A673 (cell line): ENCODE measurements at regions of chr18 and their contacts with region 1.

Region 1: GRCh38 chr18:40565805-40566509 is 1389.1 kb upstream of the PIK3C3 start:
- DNase-seq: no peak
- H3K4me3 ChIP-seq: no peak overlapping the region
- H3K27ac ChIP-seq: no peak overlapping the region
- H3K4me1 ChIP-seq: no peaks in the 10 kb centered on the region
- H3K27me3 ChIP-seq: no peaks in the 10 kb centered on the region
- CTCF ChIP-seq: no peak

Region 2: GRCh38 chr18:41645589-41646360 is 1079.8 kb after region 1 on chr18:
- CTCF ChIA-PET with region 1: no interaction called
- POLR2A ChIA-PET with region 1: no interaction called
- intact Hi-C with region 1: no loop called
- DNase-seq: no peak
- H3K4me3 ChIP-seq: no peak overlapping the region
- H3K27ac ChIP-seq: no peak overlapping the region
- H3K4me1 ChIP-seq: no peaks in the 10 kb centered on the region
- H3K27me3 ChIP-seq: peaks cover 7% of the 10 kb centered on the region
- CTCF ChIP-seq: no peak

Region 3: DNA sequence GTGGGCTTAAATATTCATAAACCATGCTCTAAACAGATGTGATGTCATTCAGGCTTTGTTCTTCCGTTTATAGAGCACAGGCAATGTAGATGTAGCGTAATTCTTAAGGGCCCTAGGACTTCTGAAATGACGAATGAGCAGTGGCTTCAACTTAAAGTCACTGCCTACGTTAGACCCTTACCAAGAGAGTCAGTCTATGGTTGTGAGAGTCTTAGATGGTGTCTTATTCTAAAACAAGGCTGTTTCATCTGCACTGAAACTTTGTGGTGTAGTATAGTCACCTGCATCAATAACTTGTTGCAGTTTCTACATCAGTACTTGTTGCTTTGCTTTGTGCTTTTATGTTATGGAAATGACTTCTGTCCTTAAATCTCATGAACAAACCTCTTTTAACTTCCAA is 1445.1 kb after region 1 on chr18:
- CTCF ChIA-PET with region 1: interaction called, 11 read pairs
- POLR2A ChIA-PET with region 1: no interaction called
- intact Hi-C with region 1: no loop called
- DNase-seq: no peak
- H3K4me3 ChIP-seq: no peak overlapping the region
- H3K27ac ChIP-seq: no peak overlapping the region
- H3K4me1 ChIP-seq: no peaks in the 10 kb centered on the region
- H3K27me3 ChIP-seq: no peaks in the 10 kb centered on the region
- CTCF ChIP-seq: no peak